ENCODE measurements at regions of chr12 and their contacts with region 1.

Region 1: DNA sequence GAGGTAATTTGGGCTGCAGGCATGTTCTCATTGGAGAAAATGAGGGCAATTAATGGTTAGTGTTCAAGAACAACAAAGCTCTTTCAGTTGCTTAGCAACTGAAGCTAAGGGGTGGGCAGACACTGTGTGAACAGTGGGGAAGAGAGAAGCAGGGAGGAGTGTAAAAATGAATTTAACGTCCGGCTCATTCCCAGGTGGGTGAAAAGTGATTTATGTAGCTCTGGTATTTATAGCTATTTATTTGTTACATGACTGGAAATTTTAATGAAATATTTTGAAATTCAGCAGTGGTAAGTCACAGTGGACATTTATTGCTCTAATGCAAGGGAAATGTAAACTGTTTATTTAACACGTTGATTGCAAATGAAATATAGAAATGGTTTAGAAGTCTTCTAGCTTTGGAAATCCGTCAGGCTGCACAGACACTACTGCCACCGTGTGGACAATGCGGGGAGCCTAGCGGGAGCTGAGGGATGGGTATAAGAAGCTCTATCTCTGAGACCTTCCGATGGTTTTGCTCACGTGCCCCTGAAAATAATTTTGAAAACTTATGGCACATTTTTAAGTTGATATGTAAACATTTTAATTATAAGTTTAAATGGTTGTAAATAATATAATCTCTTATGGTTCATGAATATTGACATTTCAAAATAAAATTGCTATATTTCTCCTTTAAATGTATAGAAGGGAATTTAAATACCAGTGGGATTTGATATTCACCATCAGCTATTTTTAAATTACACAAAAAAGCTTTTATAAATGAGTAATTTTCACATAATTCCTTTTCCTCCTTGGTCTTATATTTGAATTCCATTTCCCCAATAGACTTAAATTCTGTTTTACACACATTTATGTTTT is 54.4 kb downstream of the E2F7 start:
- DNase-seq: peak; percentile 34 to 76 (median 59)
- ATAC-seq: peak; percentile 69
- H3K4me3 ChIP-seq: no peak overlapping the region
- H3K4me3 Mint-ChIP-seq: no peak overlapping the region
- H3K27ac ChIP-seq: no peak overlapping the region
- H3K27ac Mint-ChIP-seq: no peak overlapping the region
- H3K4me1 ChIP-seq: no peaks in the 10 kb centered on the region
- H3K4me1 Mint-ChIP-seq: peaks cover 2% of the 10 kb centered on the region
- H3K27me3 ChIP-seq: no peaks in the 10 kb centered on the region
- H3K27me3 Mint-ChIP-seq: peaks cover 2% of the 10 kb centered on the region
- CTCF ChIP-seq: peak; percentile 87

Region 2: DNA sequence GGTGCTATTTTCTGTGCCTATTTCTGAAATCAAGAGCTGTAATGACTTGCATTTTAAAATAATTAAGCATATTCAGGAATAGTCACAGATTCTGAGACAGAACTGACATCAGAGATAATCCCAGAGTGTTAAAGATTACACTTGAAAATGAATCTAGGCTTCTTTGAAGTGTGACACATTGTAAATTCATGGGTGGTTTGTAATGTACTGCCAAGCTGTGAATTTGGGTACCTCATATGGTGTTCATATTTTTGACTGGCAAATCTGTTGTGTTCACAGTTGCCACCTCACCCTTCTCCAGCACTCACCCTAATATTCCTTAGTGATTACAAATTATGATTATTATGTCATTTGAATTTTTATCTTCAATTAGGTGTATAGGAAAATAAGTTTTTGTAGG is 53.6 kb before region 1 on chr12:
- CTCF ChIA-PET with region 1: no interaction called
- POLR2A ChIA-PET with region 1: no interaction called
- intact Hi-C with region 1: no loop called
- DNase-seq: no peak
- ATAC-seq: no peak
- H3K4me3 ChIP-seq: no peak overlapping the region
- H3K4me3 Mint-ChIP-seq: no peak overlapping the region
- H3K27ac ChIP-seq: no peak overlapping the region
- H3K27ac Mint-ChIP-seq: no peak overlapping the region
- H3K4me1 ChIP-seq: no peaks in the 10 kb centered on the region
- H3K4me1 Mint-ChIP-seq: no peaks in the 10 kb centered on the region
- H3K27me3 ChIP-seq: no peaks in the 10 kb centered on the region
- H3K27me3 Mint-ChIP-seq: peaks cover 3% of the 10 kb centered on the region
- CTCF ChIP-seq: no peak

Region 3: DNA sequence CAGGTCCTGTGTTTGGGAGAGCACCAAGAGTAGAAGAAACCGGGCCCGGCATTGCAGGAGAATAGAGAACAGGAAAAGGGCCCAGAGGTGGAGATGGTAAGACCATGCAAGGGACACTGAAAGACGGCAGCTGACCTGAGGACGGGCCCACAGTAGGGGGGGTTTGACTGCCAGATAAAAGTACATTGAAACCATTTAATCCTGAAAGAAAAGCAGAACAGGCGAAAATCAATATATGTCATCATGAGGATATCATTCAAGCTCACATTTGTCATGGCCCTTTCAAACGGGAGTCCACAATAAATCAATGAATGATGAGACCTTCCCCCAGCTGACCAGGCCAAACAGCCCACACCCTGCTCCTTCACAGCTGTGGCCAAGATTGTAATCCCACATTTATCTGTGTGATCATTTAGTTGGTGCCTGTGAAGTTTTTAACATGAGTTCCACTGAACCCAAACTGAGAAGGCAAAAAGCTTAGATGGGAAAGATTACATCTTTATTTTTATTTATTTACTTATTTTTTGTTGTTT is 14.9 kb after region 1 on chr12:
- CTCF ChIA-PET with region 1: interaction called, 22 read pairs
- POLR2A ChIA-PET with region 1: no interaction called
- intact Hi-C with region 1: no loop called
- DNase-seq: no peak
- ATAC-seq: no peak
- H3K4me3 ChIP-seq: no peak overlapping the region
- H3K4me3 Mint-ChIP-seq: no peak overlapping the region
- H3K27ac ChIP-seq: no peak overlapping the region
- H3K27ac Mint-ChIP-seq: no peak overlapping the region
- H3K4me1 ChIP-seq: no peaks in the 10 kb centered on the region
- H3K4me1 Mint-ChIP-seq: no peaks in the 10 kb centered on the region
- H3K27me3 ChIP-seq: no peaks in the 10 kb centered on the region
- H3K27me3 Mint-ChIP-seq: no peaks in the 10 kb centered on the region
- CTCF ChIP-seq: no peak

Region 4: GRCh38 chr12:78149459-78149858 is 1138.5 kb after region 1 on chr12:
- CTCF ChIA-PET with region 1: no interaction called
- POLR2A ChIA-PET with region 1: no interaction called
- intact Hi-C with region 1: no loop called
- DNase-seq: no peak
- ATAC-seq: no peak
- H3K4me3 ChIP-seq: no peak overlapping the region
- H3K4me3 Mint-ChIP-seq: no peak overlapping the region
- H3K27ac ChIP-seq: no peak overlapping the region
- H3K27ac Mint-ChIP-seq: no peak overlapping the region
- H3K4me1 ChIP-seq: no peaks in the 10 kb centered on the region
- H3K4me1 Mint-ChIP-seq: no peaks in the 10 kb centered on the region
- H3K27me3 ChIP-seq: no peaks in the 10 kb centered on the region
- H3K27me3 Mint-ChIP-seq: no peaks in the 10 kb centered on the region
- CTCF ChIP-seq: no peak

Measured in CD8-positive, alpha-beta T cell (primary cell).